ENCODE measurements at regions of chr5 and their contacts with region 1.

Region 1: DNA sequence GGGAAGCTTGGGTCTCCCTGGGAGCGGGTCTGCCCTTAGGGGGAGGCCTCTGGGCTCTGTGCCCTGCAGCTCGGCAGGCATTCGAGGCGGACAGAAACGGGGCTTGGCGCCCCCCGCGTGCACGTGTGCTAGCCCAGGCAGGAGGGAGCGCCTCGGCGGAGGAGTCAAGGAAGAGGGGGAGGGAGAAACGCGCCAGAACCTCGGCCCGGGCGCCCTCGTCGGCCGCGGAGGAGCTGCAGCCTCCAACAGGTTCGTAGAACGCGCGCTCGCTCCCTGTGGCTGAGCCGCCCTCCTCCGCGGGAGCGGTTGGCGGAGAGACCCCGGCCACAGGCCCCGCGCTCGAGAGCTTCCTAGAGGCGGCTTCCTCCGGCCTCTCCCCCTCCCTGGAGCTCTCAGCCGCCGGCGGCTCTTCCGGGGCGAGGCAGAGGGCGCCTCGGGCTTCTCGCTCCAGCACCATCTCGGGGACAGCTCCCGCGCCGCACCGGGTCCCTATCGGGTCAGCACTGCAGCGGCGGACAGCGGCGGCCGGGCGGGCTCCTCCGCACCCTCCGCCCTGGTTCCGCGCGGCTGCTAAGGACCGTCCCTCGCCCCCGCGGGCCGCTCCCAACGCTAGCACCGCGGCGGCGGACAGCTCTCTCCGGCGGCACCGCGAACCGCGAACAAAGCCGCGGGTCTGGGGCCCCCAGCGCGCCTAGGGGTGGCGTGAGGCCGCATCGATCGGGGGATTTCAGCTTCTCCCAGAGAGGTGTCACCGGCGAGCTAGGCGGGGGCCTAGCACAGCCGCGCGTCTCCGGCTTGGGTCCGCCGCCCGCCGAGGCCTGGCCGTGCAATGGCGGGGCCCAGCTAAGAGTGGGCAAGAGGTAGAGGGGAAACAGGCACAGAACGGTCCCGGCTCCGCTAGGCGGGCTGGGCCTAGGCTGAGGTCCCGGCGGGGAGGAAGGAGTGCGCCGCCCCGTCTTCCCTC is 74.6 kb upstream of the CPLX2 start:
- DNase-seq: peak; percentile 82 to 90 (median 84)
- ATAC-seq: peak; percentile 94 to 100 (median 98)
- H3K4me3 ChIP-seq: peak overlapping the region in 7 of 12 donors; percentile 12 to 33 (median 17)
- H3K27ac ChIP-seq: no peak overlapping the region
- H3K4me1 ChIP-seq: peaks cover 0 to 19% (median 8%) of the 10 kb centered on the region in 12 donors
- H3K27me3 ChIP-seq: peaks cover 0 to 75% (median 18%) of the 10 kb centered on the region in 9 donors
- CTCF ChIP-seq: no peak
- POLR2A ChIP-seq: no peak

Region 2: DNA sequence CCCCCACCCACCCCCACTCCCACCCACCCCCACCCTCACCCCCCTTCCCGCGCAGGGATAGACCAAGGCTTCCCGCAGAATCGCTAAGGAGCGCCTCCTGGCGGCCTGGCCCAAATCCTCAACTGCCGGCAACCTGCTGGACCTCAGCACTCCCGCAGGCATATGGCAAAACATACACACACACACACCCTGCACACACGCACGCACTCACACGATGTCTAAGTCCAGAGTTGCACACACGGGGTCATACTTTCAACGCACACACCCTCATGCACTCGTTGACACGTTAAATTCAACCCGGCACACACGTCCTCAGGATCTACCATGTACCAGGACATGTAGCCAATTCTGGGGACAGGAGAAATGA is 76.3 kb after region 1 on chr5:
- intact Hi-C with region 1: loop called in 2 of 10 experiments (anchors 5 kb)
- DNase-seq: no peak
- ATAC-seq: no peak
- H3K4me3 ChIP-seq: no peak overlapping the region
- H3K27ac ChIP-seq: no peak overlapping the region
- H3K4me1 ChIP-seq: peaks cover 0 to 15% (median 5%) of the 10 kb centered on the region in 12 donors
- H3K27me3 ChIP-seq: peaks cover 23 to 65% (median 42%) of the 10 kb centered on the region in 9 donors
- CTCF ChIP-seq: no peak
- POLR2A ChIP-seq: no peak

Measured in heart left ventricle (tissue), 16 donors.